ENCODE measurements at regions of chr4 and their contacts with region 1.

Region 1: GRCh38 chr4:158856852-158857251 is 88.0 kb downstream of the FNIP2 start:
- DNase-seq: peak; percentile 8
- H3K4me3 ChIP-seq: no peak overlapping the region
- H3K27ac ChIP-seq: no peak overlapping the region
- H3K27me3 ChIP-seq: no peaks in the 10 kb centered on the region
- CTCF ChIP-seq: peak; percentile 64

Region 2: DNA sequence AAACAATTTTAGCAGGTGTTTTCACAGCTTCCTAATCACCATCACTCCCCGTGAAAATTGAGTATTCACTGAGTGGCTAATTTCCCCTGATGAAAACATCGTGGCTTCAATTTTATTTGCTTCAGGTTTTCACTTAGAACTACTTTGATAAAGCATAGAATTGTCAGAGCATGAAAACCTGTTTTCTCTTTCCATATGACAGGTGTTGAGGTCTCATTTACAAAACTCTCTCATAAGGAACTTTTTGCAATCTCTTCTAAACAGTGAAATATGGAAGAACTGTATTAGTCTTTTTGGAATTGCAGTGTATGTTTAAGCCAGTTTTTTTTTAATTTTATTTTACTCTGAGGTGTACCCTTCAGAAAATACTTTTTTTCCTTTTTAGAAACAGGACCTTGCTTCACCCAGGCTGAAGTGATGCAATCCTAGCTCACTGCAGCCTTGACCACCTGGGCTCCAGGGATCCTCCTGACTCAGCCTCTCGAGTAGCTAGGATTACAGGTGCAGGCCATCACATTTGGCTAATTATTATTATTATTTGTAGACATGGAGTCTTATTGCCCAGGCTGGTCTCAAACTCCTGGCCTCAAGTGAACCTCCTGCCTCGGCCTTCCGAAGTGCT is 134.8 kb after region 1 on chr4:
- CTCF ChIA-PET with region 1: no interaction called
- POLR2A ChIA-PET with region 1: no interaction called
- DNase-seq: no peak
- H3K4me3 ChIP-seq: no peak overlapping the region
- H3K27ac ChIP-seq: no peak overlapping the region
- H3K27me3 ChIP-seq: no peaks in the 10 kb centered on the region
- CTCF ChIP-seq: no peak

Region 3: DNA sequence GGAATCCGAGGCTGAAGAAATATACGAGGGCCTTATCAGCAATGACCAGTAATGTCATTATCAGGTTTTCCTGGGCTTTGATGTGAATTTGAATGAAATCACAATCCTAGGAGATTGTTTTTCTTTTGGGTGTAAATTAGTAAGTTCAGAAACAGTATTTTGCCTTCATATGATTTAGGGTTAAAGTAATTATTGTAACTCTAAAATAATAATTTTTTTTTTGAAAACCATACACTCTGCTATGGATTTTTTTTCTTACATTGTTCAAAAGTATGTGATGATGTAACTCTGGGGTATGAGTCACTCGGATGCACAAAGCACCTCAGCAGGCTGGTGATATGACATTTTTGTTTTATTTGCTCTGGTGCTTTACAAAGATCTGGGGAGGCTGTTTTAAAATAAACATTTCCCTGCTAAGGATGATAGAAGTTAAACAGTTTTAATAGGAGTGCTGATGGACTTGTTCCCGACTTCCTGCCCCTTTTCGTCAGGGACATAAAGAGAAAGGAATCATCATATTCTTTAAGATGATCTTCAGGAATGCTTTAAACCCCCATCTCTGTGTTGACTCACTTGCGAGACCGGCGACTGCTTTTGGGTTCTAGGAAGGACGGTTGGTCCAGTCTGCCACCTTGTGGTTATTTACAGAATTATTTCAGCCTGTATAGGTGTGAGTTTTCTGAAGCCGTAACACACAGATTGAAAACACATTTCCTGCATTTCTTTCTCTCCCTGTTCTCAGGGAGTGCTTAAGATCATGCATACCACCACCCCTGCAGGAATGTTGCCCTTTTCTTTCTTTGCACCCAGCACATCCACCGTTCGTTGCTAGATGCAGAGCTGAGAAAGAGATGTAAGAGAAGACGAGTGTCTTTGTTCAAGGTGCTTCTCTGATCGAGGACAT is 318.5 kb after region 1 on chr4:
- CTCF ChIA-PET with region 1: interaction called, 31 read pairs
- POLR2A ChIA-PET with region 1: no interaction called
- DNase-seq: peak; percentile 74
- H3K4me3 ChIP-seq: peak overlapping the region; percentile 42
- H3K27ac ChIP-seq: peak overlapping the region; percentile 39
- H3K27me3 ChIP-seq: no peaks in the 10 kb centered on the region
- CTCF ChIP-seq: peak; percentile 83

Region 4: GRCh38 chr4:159191989-159192388 is 335.1 kb after region 1 on chr4:
- CTCF ChIA-PET with region 1: interaction called, 17 read pairs
- POLR2A ChIA-PET with region 1: no interaction called
- DNase-seq: no peak
- H3K4me3 ChIP-seq: no peak overlapping the region
- H3K27ac ChIP-seq: no peak overlapping the region
- H3K27me3 ChIP-seq: no peaks in the 10 kb centered on the region
- CTCF ChIP-seq: peak; percentile 54

Region 5: GRCh38 chr4:159201168-159201567 is 344.3 kb after region 1 on chr4:
- CTCF ChIA-PET with region 1: interaction called, 86 read pairs
- POLR2A ChIA-PET with region 1: no interaction called
- DNase-seq: no peak
- H3K4me3 ChIP-seq: no peak overlapping the region
- H3K27ac ChIP-seq: no peak overlapping the region
- H3K27me3 ChIP-seq: no peaks in the 10 kb centered on the region
- CTCF ChIP-seq: no peak